HCT116 (cell line): ENCODE measurements at regions of chr15 and their contacts with region 1.

Region 1: DNA sequence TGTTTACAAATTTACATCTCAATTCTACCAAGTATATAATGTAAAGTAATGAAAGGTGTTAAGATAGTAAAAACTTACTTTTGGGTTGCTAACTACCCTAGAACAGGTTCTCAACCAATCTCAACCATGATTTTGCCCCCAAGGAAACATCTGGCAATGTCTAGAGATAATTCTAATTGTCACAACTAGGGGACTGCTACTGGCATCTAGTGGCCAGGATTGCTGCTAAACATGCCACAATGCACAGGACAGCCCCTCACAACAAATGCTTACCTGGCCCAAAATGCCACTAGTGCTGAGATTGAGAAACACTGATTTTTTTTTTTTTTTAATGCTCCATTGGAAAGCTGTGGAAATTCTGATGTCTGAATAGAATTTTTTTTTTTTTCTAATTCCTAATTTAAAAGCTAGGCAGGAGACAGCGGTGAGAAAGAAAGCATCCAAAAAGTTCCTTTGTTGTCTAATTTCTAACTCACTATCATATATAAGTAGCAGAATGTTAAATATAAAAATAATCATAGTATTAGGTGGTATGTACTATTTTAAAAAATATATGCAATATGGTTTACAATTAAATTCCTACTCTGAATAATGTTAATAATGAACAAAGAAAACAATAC is 81.5 kb downstream of the TJP1 start:
- DNase-seq: no peak
- ATAC-seq: peak; percentile 35
- H3K4me3 ChIP-seq: no peak overlapping the region
- H3K27ac ChIP-seq: no peak overlapping the region
- H3K4me1 ChIP-seq: peaks cover 21 to 35% of the 10 kb centered on the region in 2 experiments
- H3K27me3 ChIP-seq: no peaks in the 10 kb centered on the region
- CTCF ChIP-seq: peak; percentile 32 to 59 (median 54); a peak in 5 of 6 replicates
- POLR2A ChIP-seq: no peak
- RAD21 ChIP-seq: peak; percentile 42; the same call in 1 of the 2 replicates

Region 2: DNA sequence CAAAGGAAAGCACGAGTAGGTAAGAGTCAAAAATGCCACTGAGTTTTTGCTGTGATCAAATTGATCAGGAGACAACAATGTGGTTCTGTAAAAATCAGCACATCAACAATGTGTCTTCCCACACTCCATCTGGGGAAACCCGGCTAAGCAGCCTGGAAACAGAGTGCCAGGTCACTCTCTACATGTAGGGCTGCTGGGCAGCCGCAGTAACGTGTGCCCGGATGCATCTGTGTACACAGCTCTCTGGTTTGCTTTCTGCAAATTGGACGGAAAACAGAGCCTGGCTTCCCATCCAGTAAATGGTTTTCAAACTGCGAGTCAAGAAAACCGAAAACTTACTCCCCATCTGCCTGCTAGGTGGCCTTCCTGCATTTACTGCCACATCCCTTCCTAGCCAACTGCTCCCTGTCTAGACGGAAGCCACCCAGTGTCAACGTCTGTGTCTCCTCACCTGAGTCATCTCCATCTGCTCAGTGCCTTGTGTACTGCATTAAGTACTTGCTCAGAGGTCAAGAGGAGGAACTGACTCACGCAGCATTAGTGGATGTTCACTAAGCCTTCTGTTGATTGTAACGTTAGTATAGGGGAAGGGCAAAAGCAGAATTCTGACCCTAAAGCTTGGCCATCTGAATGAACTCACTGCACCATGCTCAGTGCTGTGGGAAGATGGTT is 42.6 kb before region 1 on chr15:
- CTCF ChIA-PET with region 1: no interaction called
- POLR2A ChIA-PET with region 1: no interaction called
- RAD21 ChIA-PET with region 1: no interaction called
- intact Hi-C with region 1: loop called (anchors 5 kb)
- DNase-seq: peak; percentile 68
- ATAC-seq: peak; percentile 90
- H3K4me3 ChIP-seq: no peak overlapping the region
- H3K27ac ChIP-seq: no peak overlapping the region
- H3K4me1 ChIP-seq: peaks cover 18 to 36% of the 10 kb centered on the region in 2 experiments
- H3K27me3 ChIP-seq: no peaks in the 10 kb centered on the region
- CTCF ChIP-seq: no peak
- POLR2A ChIP-seq: no peak
- RAD21 ChIP-seq: peak; percentile 11; the same call in 1 of the 2 replicates

Region 3: DNA sequence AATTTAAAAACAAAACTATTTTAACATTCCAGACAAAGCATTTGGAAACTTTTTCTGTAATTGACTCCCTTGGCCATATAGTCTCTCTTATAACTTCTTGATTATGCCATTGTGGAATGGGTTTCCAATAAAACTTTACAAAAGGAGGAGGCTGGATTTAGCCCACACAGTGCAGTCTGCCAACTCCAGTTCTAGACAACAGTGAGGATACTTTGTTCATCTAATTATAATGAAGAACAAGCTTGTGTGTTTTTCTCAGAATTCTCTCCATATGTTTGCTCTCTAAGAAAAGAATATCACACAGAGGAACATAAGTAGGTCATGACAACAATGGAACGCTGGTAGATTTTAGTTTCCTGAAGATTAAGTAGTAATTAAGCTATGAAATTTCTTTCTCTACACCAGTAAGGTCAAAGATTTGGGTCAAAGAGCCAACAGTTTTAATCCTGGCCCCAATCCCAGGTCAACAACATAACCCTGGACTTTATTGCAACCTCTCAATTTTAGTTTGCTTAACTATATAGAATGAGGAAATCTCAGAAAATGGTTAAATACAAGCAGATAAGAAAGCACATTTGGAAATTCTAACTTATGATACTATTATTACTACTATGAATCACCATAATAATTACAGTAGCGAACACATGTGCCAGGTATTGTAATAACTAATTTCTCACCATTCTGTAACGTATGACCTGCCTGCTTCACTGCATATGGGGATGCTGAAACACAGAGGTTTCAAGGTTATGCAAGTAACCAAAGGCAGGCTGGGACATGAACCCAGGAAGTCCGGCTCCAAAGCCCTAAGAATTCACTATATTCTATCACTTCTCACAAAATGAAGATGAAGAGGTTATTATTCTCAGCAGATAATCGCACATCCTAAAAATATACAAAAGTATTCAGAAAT is 15.8 kb after region 1 on chr15:
- CTCF ChIA-PET with region 1: no interaction called
- POLR2A ChIA-PET with region 1: no interaction called
- RAD21 ChIA-PET with region 1: no interaction called
- intact Hi-C with region 1: loop called (anchors 2 kb)
- DNase-seq: no peak
- ATAC-seq: no peak
- H3K4me3 ChIP-seq: no peak overlapping the region
- H3K27ac ChIP-seq: no peak overlapping the region
- H3K4me1 ChIP-seq: no peaks in the 10 kb centered on the region
- H3K27me3 ChIP-seq: no peaks in the 10 kb centered on the region
- CTCF ChIP-seq: no peak
- POLR2A ChIP-seq: no peak
- RAD21 ChIP-seq: no peak

Region 4: DNA sequence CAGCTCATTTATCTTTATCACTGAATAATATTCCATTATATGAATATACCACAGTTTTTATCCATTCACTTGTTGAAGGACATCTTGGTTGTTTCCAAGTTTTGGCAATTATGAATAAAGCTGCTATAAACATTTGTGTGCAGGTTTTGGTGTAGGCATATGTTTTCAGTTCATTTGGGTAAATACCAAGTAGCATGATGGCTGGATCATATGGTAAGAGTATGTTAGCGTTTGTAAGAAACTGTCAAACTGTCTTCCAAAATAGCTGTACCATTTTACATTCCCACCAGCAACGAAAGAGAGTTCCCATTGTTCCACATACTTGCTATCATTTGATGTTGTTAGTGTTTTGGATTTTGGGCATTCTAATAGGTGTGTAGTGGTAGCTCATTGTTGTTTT is 269.9 kb after region 1 on chr15:
- CTCF ChIA-PET with region 1: no interaction called
- POLR2A ChIA-PET with region 1: no interaction called
- RAD21 ChIA-PET with region 1: no interaction called
- intact Hi-C with region 1: no loop called
- DNase-seq: no peak
- ATAC-seq: no peak
- H3K4me3 ChIP-seq: no peak overlapping the region
- H3K27ac ChIP-seq: no peak overlapping the region
- H3K4me1 ChIP-seq: no peaks in the 10 kb centered on the region
- H3K27me3 ChIP-seq: no peaks in the 10 kb centered on the region
- CTCF ChIP-seq: no peak
- POLR2A ChIP-seq: no peak
- RAD21 ChIP-seq: no peak

Region 5: GRCh38 chr15:30030350-30030749 is 289.5 kb after region 1 on chr15:
- CTCF ChIA-PET with region 1: no interaction called
- POLR2A ChIA-PET with region 1: no interaction called
- RAD21 ChIA-PET with region 1: interaction called in 1 of 2 experiments, 3 read pairs
- intact Hi-C with region 1: loop called (anchors 5 kb)
- DNase-seq: peak; percentile 13
- ATAC-seq: no peak; the same call in 1 of the 2 replicates
- H3K4me3 ChIP-seq: no peak overlapping the region
- H3K27ac ChIP-seq: no peak overlapping the region
- H3K4me1 ChIP-seq: no peaks in the 10 kb centered on the region
- H3K27me3 ChIP-seq: no peaks in the 10 kb centered on the region
- CTCF ChIP-seq: peak; percentile 31 to 61 (median 37); a peak in 4 of 6 replicates
- POLR2A ChIP-seq: no peak
- RAD21 ChIP-seq: peak; percentile 54